Calu3 (cell line): ENCODE measurements at regions of chr2 and their contacts with region 1.

Region 1: GRCh38 chr2:112941753-112942658 is 31.0 kb downstream of the IL37 start:
- DNase-seq: peak; percentile 90
- H3K4me3 Mint-ChIP-seq: no peak overlapping the region
- H3K27ac Mint-ChIP-seq: peak overlapping the region; percentile 44
- H3K4me1 Mint-ChIP-seq: peaks cover 55% of the 10 kb centered on the region
- H3K27me3 Mint-ChIP-seq: no peaks in the 10 kb centered on the region
- CTCF ChIP-seq: peak; percentile 81

Region 2: GRCh38 chr2:112626604-112627059 is 315.4 kb before region 1 on chr2:
- CTCF ChIA-PET with region 1: interaction called, 18 read pairs
- intact Hi-C with region 1: no loop called
- DNase-seq: peak; percentile 74
- H3K4me3 Mint-ChIP-seq: peak overlapping the region; percentile 43
- H3K27ac Mint-ChIP-seq: peak overlapping the region; percentile 85
- H3K4me1 Mint-ChIP-seq: peaks cover 61% of the 10 kb centered on the region
- H3K27me3 Mint-ChIP-seq: no peaks in the 10 kb centered on the region
- CTCF ChIP-seq: peak; percentile 89

Region 3: GRCh38 chr2:112645310-112646101 is 296.5 kb before region 1 on chr2 and contains the start of gene SLC20A1:
- CTCF ChIA-PET with region 1: interaction called, 10 read pairs
- intact Hi-C with region 1: no loop called
- DNase-seq: peak; percentile 99
- H3K4me3 Mint-ChIP-seq: peak within 1 kb of the TSS; percentile 88
- H3K27ac Mint-ChIP-seq: peak within 1 kb of the TSS; percentile 95
- H3K4me1 Mint-ChIP-seq: peaks cover 58% of the 10 kb centered on the region
- H3K27me3 Mint-ChIP-seq: no peaks in the 10 kb centered on the region
- CTCF ChIP-seq: peak; percentile 58
- total RNA-seq, gene SLC20A1: 71.7 and 84.5 TPM in 2 replicates

Region 4: DNA sequence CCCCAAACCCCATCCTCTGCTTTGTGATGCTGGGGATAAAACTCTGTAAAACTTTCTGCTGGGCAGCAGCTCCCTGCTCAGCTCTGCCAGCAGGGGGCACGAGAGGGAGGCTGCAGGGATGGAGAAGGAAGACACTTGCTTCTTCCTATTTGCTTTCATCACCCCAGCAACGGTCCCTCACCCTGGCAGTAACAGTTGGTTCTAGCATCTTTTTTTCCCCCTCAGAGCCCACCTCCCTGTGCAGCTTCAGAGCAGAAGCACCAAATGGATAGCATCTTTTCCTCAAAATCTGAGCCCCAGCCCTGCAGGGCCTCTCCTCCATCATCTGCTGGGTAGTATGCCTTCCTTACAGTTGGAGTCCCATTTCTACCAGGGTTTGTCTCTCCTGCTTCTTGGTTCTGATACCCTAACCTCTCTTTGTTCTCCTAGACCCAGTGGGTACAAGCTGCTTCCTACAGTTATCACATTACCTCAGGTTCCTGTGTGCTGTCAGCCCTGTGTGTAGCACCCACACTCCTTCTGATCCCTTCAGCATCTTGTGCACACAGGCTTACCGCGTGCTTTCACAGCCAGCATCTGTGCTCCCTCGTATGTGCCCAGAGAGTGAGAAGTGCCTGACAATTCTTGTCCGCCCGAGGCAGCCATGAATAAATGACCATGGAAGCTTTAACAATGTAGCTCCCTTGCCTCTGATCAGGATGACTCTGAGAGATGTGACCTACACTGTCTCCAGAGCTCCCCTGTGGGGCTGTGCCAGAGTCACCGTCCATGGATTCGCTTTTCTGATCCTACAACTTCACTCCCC is 192.0 kb before region 1 on chr2:
- CTCF ChIA-PET with region 1: interaction called, 52 read pairs
- intact Hi-C with region 1: loop called (anchors 1 kb)
- DNase-seq: peak; percentile 89
- H3K4me3 Mint-ChIP-seq: no peak overlapping the region
- H3K27ac Mint-ChIP-seq: peak overlapping the region; percentile 88
- H3K4me1 Mint-ChIP-seq: peaks cover 61% of the 10 kb centered on the region
- H3K27me3 Mint-ChIP-seq: no peaks in the 10 kb centered on the region
- CTCF ChIP-seq: peak; percentile 93

Region 5: GRCh38 chr2:112884869-112885505 is 57.0 kb before region 1 on chr2:
- CTCF ChIA-PET with region 1: interaction called, 26 read pairs
- intact Hi-C with region 1: loop called (anchors 5 kb)
- DNase-seq: peak; percentile 86
- H3K4me3 Mint-ChIP-seq: no peak overlapping the region
- H3K27ac Mint-ChIP-seq: peak overlapping the region; percentile 44
- H3K4me1 Mint-ChIP-seq: peaks cover 56% of the 10 kb centered on the region
- H3K27me3 Mint-ChIP-seq: no peaks in the 10 kb centered on the region
- CTCF ChIP-seq: peak; percentile 91

Region 6: GRCh38 chr2:112924821-112925220 is 17.2 kb before region 1 on chr2:
- CTCF ChIA-PET with region 1: interaction called, 12 read pairs
- intact Hi-C with region 1: no loop called
- DNase-seq: peak; percentile 57
- H3K4me3 Mint-ChIP-seq: no peak overlapping the region
- H3K27ac Mint-ChIP-seq: peak overlapping the region; percentile 83
- H3K4me1 Mint-ChIP-seq: peaks cover 28% of the 10 kb centered on the region
- H3K27me3 Mint-ChIP-seq: no peaks in the 10 kb centered on the region
- CTCF ChIP-seq: no peak

Region 7: GRCh38 chr2:112958428-112959108 is 16.6 kb after region 1 on chr2:
- CTCF ChIA-PET with region 1: interaction called, 13 read pairs
- intact Hi-C with region 1: no loop called
- DNase-seq: peak; percentile 58
- H3K4me3 Mint-ChIP-seq: no peak overlapping the region
- H3K27ac Mint-ChIP-seq: no peak overlapping the region
- H3K4me1 Mint-ChIP-seq: no peaks in the 10 kb centered on the region
- H3K27me3 Mint-ChIP-seq: no peaks in the 10 kb centered on the region
- CTCF ChIP-seq: peak; percentile 71

Region 8: GRCh38 chr2:113233593-113234550 is 291.9 kb after region 1 on chr2:
- CTCF ChIA-PET with region 1: no interaction called
- intact Hi-C with region 1: no loop called
- DNase-seq: no peak
- H3K4me3 Mint-ChIP-seq: no peak overlapping the region
- H3K27ac Mint-ChIP-seq: no peak overlapping the region
- H3K4me1 Mint-ChIP-seq: peaks cover 27% of the 10 kb centered on the region
- H3K27me3 Mint-ChIP-seq: no peaks in the 10 kb centered on the region
- CTCF ChIP-seq: no peak